Lower leg skin (tissue), 4 donors: ENCODE measurements at regions of chr1 and their contacts with region 1.

Region 1: DNA sequence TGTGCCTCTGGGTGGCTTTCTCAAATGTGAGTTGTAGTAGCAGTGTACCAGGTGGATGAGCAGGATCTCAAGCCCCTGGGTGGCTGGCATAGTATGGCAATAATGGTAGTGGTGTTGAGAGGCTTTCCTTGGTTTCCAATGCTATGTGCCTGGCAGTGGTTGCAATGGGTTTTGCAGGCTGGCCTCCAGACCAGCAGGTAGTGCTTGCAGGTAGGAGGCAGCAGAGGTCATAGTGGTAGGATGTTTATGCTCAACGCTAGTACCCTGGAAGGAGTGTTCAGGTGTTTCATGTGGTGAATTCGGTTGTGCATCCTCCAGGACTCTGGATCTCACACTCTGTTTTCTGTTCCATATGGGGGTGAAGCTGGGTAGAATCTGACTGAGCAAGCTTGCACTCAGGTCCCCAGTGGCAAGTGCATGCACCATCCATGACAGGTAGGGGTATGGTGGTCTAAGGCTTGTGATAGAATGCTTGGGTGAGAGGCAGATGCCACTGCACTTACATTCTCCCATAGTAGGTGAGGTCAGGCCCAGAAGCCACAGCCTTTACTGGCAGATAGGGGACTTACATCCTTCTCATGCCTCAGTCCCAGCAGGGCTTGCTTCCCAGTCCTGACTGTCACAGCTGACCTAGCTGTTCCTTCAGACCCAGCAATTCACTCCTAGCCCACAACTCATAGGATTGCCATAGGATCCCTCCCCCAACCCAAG is 410.5 kb upstream of the LRRC7 start:
- DNase-seq: no peak
- H3K4me3 ChIP-seq: no peak overlapping the region
- CTCF ChIP-seq: no peak
- POLR2A ChIP-seq: no peak

Region 2: GRCh38 chr1:68890736-68891135 is 266.5 kb before region 1 on chr1:
- intact Hi-C with region 1: loop called (anchors 5 kb)
- DNase-seq: no peak
- H3K4me3 ChIP-seq: no peak overlapping the region
- CTCF ChIP-seq: no peak
- POLR2A ChIP-seq: no peak

Region 3: GRCh38 chr1:69103705-69104385 is 53.4 kb before region 1 on chr1:
- intact Hi-C with region 1: no loop called
- DNase-seq: no peak
- H3K4me3 ChIP-seq: no peak overlapping the region
- CTCF ChIP-seq: no peak
- POLR2A ChIP-seq: no peak

Region 4: DNA sequence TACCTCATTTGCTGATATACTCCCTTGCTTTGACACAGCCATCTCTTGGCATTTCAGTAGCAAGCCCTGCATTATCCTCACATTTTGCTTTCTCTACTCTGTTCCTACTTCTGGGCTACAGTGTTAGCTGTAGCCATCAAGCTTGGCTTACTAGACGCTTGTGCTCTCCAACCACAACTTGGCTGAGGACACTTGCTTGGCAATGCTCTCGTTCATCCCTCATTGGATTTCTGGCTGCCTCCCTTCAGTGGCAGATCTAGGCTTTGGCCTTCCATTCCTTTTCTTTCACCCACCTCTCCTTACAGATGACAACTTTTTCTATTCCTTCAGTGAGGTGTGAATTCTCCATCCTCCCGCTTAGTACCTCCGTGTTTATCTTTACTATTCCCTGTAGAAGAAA is 18.2 kb before region 1 on chr1:
- intact Hi-C with region 1: no loop called
- DNase-seq: no peak
- H3K4me3 ChIP-seq: no peak overlapping the region
- CTCF ChIP-seq: no peak
- POLR2A ChIP-seq: no peak

Region 5: GRCh38 chr1:69363236-69363635 is 206.0 kb after region 1 on chr1:
- intact Hi-C with region 1: no loop called
- DNase-seq: no peak
- H3K4me3 ChIP-seq: no peak overlapping the region
- CTCF ChIP-seq: no peak
- POLR2A ChIP-seq: no peak

Region 6: GRCh38 chr1:70963374-70963773 is 1806.2 kb after region 1 on chr1:
- intact Hi-C with region 1: loop called (anchors 5 kb)
- DNase-seq: no peak
- H3K4me3 ChIP-seq: no peak overlapping the region
- CTCF ChIP-seq: no peak
- POLR2A ChIP-seq: no peak